ENCODE measurements at regions of chr2 and their contacts with region 1.

Region 1: DNA sequence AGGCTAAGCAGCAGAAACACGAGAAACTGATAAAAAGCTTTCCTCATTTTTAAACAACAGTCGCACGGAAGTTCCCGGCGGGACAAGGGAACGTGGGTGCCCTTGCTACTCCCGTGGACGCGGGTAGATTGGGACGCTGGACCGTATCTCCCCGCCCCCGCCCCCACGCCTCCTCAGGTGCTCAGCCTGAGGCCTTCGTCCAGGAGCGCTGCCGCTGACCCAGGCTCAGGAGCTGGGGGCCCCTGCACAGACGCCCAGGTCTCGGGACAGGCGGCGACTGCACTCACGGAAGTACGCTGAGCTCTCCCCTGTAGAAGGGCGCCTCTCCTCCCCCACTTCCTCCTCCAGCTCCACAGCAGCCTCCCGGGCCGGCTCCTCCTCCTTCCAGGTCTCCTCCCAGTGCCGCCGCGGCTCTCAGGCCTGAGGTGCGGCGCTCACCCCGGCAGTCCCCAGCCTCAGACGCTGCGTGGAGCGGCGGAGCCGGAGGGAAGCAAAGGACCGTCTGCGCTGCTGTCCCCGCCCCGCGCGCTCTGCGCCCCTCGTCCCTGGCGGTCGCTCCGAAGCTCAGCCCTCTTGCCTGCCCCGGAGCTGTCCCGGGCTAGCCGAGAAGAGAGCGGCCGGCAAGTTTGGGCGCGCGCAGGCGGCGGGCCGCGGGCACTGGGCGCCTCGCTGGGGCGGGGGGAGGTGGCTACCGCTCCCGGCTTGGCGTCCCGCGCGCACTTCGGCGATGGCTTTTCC is at the start of gene ITGAV:
- DNase-seq: peak; percentile 79 to 89 (median 83)
- H3K4me3 ChIP-seq: peak within 1 kb of the TSS; percentile 77 to 85
- H3K4me3 Mint-ChIP-seq: peak within 1 kb of the TSS; percentile 88 to 96 (median 94)
- H3K27ac ChIP-seq: peak within 1 kb of the TSS; percentile 46
- H3K27ac Mint-ChIP-seq: peak within 1 kb of the TSS; percentile 73 to 93 (median 88)
- H3K4me1 ChIP-seq: peaks cover 38% of the 10 kb centered on the region
- H3K4me1 Mint-ChIP-seq: peaks cover 26 to 41% (median 31%) of the 10 kb centered on the region in 4 donors
- H3K27me3 ChIP-seq: no peaks in the 10 kb centered on the region
- H3K27me3 Mint-ChIP-seq: peaks cover 0 to 3% of the 10 kb centered on the region in 2 donors
- total RNA-seq, gene ITGAV: 11.0 to 12.0 TPM

Region 2: GRCh38 chr2:186518945-186519344 is 70.8 kb before region 1 on chr2:
- CTCF ChIA-PET with region 1: interaction called, 5 read pairs
- POLR2A ChIA-PET with region 1: no interaction called
- intact Hi-C with region 1: loop called (anchors 5 kb)
- DNase-seq: no peak
- H3K4me3 ChIP-seq: no peak overlapping the region
- H3K4me3 Mint-ChIP-seq: no peak overlapping the region
- H3K27ac ChIP-seq: no peak overlapping the region
- H3K27ac Mint-ChIP-seq: peak overlapping the region in 1 of 7 donors; percentile 64
- H3K4me1 ChIP-seq: no peaks in the 10 kb centered on the region
- H3K4me1 Mint-ChIP-seq: peaks cover 0 to 2% (median 0%) of the 10 kb centered on the region in 4 donors
- H3K27me3 ChIP-seq: no peaks in the 10 kb centered on the region
- H3K27me3 Mint-ChIP-seq: no peaks in the 10 kb centered on the region

Region 3: DNA sequence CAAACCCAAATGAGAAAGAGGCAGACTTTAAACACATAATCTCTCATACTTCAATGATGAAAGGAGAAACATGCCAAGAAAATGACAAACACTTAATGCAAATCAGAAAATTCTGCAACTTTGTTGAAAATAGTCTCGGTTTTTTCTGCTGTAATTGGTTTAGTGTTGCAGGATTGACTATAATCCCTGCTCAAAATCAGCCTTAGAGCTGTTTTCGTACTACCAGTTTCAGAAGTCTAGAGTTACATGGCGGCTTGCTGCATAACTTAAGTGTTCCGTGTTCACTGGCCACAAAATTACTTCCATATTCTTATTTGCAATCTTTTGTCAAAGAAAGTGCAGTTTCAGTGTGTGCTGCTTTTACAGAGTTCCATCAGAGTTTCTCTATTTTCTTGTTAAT is 48.8 kb before region 1 on chr2:
- CTCF ChIA-PET with region 1: no interaction called
- POLR2A ChIA-PET with region 1: no interaction called
- intact Hi-C with region 1: no loop called
- DNase-seq: no peak
- H3K4me3 ChIP-seq: no peak overlapping the region
- H3K4me3 Mint-ChIP-seq: no peak overlapping the region
- H3K27ac ChIP-seq: no peak overlapping the region
- H3K27ac Mint-ChIP-seq: no peak overlapping the region
- H3K4me1 ChIP-seq: no peaks in the 10 kb centered on the region
- H3K4me1 Mint-ChIP-seq: no peaks in the 10 kb centered on the region
- H3K27me3 ChIP-seq: no peaks in the 10 kb centered on the region
- H3K27me3 Mint-ChIP-seq: peaks cover 0 to 3% of the 10 kb centered on the region in 2 donors

Measured in CD4-positive, alpha-beta memory T cell (primary cell).